ENCODE measurements at regions of chr14 and their contacts with region 1.

Region 1: GRCh38 chr14:77320238-77320935 is at the start of gene POMT2:
- DNase-seq: peak; percentile 87 to 94 (median 92)
- H3K4me3 ChIP-seq: peak within 1 kb of the TSS; percentile 95
- H3K4me3 Mint-ChIP-seq: peak within 1 kb of the TSS; percentile 93 to 100 (median 98)
- H3K27ac ChIP-seq: peak within 1 kb of the TSS; percentile 94
- H3K27ac Mint-ChIP-seq: peak within 1 kb of the TSS; percentile 96 to 99 (median 98)
- H3K4me1 ChIP-seq: peaks cover 16% of the 10 kb centered on the region
- H3K4me1 Mint-ChIP-seq: peaks cover 14 to 26% (median 21%) of the 10 kb centered on the region in 3 donors
- H3K27me3 ChIP-seq: no peaks in the 10 kb centered on the region
- H3K27me3 Mint-ChIP-seq: peaks cover 0 to 3% of the 10 kb centered on the region in 2 donors
- total RNA-seq, gene POMT2: 19.0 to 21.6 TPM

Region 2: GRCh38 chr14:77376771-77377501 is 56.5 kb after region 1 on chr14 and contains the starts of genes SAMD15 and TMED8:
- CTCF ChIA-PET with region 1: interaction called, 9 read pairs
- POLR2A ChIA-PET with region 1: interaction called, 21 read pairs
- DNase-seq: peak; percentile 78 to 89 (median 84)
- H3K4me3 ChIP-seq: peak within 1 kb of the TSS; percentile 84
- H3K4me3 Mint-ChIP-seq: peak within 1 kb of the TSS in 5 of 7 donors; percentile 86 to 93 (median 89)
- H3K27ac ChIP-seq: peak within 1 kb of the TSS; percentile 76
- H3K27ac Mint-ChIP-seq: peak within 1 kb of the TSS; percentile 64 to 98 (median 91)
- H3K4me1 ChIP-seq: peaks cover 16% of the 10 kb centered on the region
- H3K4me1 Mint-ChIP-seq: peaks cover 27 to 43% (median 41%) of the 10 kb centered on the region in 3 donors
- H3K27me3 ChIP-seq: no peaks in the 10 kb centered on the region
- H3K27me3 Mint-ChIP-seq: no peaks in the 10 kb centered on the region
- total RNA-seq, gene SAMD15: 0.83 to 1.0 TPM
- total RNA-seq, gene TMED8: 20.9 to 22.2 TPM

Region 3: DNA sequence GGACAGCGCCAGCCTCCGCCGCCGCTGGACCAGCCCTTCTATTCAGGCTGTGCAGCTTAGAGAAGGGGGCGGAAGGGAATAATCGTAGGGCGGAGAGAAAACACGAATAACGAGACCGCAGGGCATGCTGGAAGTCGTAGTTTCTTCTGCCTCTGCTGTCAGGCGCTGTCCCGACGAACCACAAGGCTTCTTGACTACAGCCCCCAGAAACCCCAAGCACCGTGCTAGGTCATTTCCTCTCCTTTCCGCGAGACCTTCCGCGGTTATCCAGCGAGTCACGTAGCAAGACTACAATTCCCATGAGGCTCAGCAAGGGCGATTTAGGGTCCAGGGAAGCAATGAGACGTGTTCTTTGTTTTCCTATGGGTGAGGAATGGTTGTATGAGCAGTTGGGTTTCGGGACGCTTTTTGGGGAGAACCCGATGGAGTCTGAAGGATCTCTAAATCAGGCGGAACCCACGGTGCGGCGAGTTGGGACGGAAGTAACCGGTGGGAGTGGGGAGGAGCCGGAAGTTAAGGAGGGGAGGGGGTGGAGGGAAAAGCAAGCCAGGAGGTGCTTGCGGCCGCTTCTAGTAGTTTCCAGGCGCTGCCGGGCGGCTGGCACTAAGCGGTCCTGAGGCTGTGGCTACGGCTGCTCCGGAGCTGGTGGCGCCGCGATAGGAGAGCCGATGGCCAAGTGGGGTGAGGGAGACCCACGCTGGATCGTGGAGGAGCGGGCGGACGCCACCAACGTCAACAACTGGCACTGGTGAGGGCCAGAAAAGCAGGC is 137.3 kb after region 1 on chr14 and contains the starts of genes AHSA1 and VIPAS39:
- CTCF ChIA-PET with region 1: interaction called, 4 read pairs
- POLR2A ChIA-PET with region 1: interaction called, 12 read pairs
- DNase-seq: peak; percentile 88 to 96 (median 96)
- H3K4me3 ChIP-seq: peak within 1 kb of the TSS; percentile 100
- H3K4me3 Mint-ChIP-seq: peak within 1 kb of the TSS; percentile 98 to 100 (median 100)
- H3K27ac ChIP-seq: peak within 1 kb of the TSS; percentile 90
- H3K27ac Mint-ChIP-seq: peak within 1 kb of the TSS; percentile 91 to 100 (median 100)
- H3K4me1 ChIP-seq: peaks cover 26% of the 10 kb centered on the region
- H3K4me1 Mint-ChIP-seq: peaks cover 31 to 66% (median 42%) of the 10 kb centered on the region in 3 donors
- H3K27me3 ChIP-seq: no peaks in the 10 kb centered on the region
- H3K27me3 Mint-ChIP-seq: no peaks in the 10 kb centered on the region
- total RNA-seq, gene AHSA1: 307 to 324 TPM
- total RNA-seq, gene VIPAS39: 18.7 to 19.6 TPM

Measured in CD8-positive, alpha-beta memory T cell (primary cell).